Spleen (tissue), 13 donors: ENCODE measurements at regions of chr21 and their contacts with region 1.

Region 1: DNA sequence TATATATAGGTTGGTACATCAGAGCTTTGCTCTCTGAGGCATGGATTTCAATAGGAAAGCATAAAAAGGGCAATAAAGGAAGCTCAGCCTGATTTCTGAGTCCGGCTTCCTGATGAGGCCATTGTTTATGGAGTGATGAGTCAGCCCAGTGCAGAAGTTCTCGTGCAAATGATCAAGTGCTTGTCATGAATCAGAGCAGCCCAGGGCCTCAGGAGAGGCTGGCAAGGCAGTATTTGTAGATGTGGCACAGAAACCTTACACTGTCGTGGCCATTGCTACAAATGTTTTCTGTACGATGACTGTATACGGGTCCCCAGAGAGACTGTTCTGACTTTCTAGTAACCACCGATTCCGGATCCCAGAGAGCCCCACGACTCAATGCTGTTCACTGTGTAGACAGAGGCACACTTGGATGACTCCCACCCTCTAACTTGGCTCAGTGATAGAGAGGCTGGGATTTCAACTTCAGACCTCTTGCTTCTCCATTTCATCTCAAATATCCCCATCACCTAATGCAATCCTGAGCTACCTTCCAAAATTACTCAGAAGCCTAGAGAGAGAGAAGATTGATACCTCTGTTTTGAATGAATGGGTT is 26.8 kb downstream of the UMODL1 start:
- DNase-seq: peak; percentile 64
- H3K4me3 ChIP-seq: no peak overlapping the region
- H3K27ac ChIP-seq: peak overlapping the region in 6 of 8 donors; percentile 27 to 62 (median 46)
- H3K4me1 ChIP-seq: peaks cover 0 to 25% (median 4%) of the 10 kb centered on the region in 6 donors
- H3K27me3 ChIP-seq: peaks cover 0 to 17% (median 0%) of the 10 kb centered on the region in 7 donors
- CTCF ChIP-seq: no peak
- POLR2A ChIP-seq: no peak

Region 2: DNA sequence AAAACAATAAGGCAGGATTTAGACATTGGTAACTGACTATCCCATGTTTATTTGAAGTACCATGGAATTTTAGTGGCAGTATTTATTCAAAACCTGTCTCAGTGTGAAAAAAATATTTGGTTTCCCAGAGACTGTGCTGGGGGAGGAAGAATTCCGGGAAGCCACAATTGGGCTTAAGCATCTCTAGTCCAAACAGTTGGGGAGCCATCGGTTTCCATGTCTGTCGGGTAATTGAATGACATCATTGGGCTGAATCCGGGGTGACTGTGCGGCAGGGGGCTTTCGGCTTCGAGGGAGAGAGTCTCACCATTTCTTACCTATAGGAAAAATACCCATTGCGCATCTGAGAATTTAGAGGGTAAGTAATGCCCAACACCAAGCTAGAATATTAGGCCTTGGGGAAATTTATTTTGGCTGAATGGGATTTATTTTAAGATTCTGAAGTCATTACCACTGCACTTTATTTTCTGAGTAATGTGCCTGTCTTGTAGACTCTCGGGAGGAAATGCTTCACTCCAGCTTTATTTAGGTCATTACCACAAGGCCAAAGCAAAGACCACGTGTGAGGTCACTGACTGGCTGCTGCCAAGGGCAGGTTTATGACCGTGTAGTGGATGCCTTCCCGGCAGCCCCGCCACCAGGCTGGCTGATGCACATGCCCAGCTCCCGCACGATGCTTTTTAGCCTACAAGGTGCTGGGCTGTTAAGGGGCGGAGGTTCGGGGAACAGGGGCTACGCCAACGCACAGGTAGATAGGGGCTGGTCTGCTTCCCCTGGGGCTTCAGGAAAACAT is 49.9 kb before region 1 on chr21:
- intact Hi-C with region 1: loop called (anchors 10 kb)
- DNase-seq: peak; percentile 78
- H3K4me3 ChIP-seq: no peak overlapping the region
- H3K27ac ChIP-seq: peak overlapping the region in 2 of 8 donors; percentile 32 to 63
- H3K4me1 ChIP-seq: peaks cover 0 to 18% (median 2%) of the 10 kb centered on the region in 6 donors
- H3K27me3 ChIP-seq: no peaks in the 10 kb centered on the region
- CTCF ChIP-seq: no peak
- POLR2A ChIP-seq: no peak